Esophagus squamous epithelium (tissue), 5 donors: ENCODE measurements at regions of chr4 and their contacts with region 1.

Region 1: DNA sequence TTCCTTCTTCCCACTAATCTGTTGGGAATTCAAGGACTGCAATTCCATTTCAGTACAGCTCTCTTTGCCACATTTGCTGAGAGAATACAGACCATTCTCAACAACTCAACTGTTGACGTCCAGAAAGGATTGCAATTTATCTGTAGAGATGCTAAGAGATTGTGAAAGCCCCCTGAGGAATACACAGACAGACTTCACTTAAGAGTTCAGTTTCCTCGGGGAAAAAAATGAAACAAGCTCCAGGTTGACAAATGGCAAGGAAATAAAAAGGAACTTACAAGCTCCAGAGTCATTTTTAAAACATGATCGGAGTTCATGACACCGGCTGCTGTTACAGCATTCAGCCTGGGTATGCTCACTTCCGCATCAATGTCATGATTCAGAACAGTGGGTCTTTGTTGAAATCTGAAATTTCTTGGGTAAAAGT is 13.8 kb downstream of the TLR10 start:
- DNase-seq: no peak
- H3K4me3 ChIP-seq: no peak overlapping the region
- H3K27ac ChIP-seq: no peak overlapping the region
- H3K4me1 ChIP-seq: peaks cover 0 to 10% (median 5%) of the 10 kb centered on the region in 3 donors
- H3K27me3 ChIP-seq: no peaks in the 10 kb centered on the region
- CTCF ChIP-seq: no peak
- POLR2A ChIP-seq: no peak

Region 2: DNA sequence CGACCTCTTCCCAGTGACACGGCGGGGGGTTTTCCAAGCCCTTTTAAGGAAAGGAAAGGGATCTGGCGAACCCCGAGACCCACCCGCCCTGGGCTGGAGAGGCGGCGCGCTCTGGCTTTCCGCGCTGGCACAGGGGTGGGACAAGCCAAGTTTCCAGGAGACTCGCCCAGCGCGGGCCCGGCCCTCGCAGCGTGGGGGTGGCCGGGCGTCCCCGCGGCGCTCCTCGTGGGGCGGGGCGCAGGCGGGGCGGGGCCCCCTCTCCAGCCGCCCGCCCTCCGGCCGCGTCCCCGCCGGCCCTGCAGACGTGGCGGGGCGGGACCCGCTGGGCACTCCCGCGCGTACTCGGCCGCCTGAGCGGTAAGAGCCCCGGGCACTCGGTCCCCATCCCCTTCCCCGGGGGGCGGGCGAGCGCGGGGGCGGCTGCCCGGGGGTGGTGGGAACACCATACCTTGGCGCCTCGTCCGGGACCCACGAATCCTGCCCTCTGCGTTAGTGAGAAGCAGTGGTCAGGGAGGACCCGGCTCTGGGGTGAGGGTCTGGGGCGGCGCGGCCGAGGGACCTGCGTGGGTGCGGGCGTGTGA is 98.6 kb after region 1 on chr4 and contains the start of gene FAM114A1:
- intact Hi-C with region 1: loop called (anchors 10 kb)
- DNase-seq: no peak
- H3K4me3 ChIP-seq: peak within 1 kb of the TSS; percentile 58 to 92 (median 83)
- H3K27ac ChIP-seq: peak within 1 kb of the TSS; percentile 87 to 98 (median 97)
- H3K4me1 ChIP-seq: peaks cover 6 to 53% (median 28%) of the 10 kb centered on the region in 3 donors
- H3K27me3 ChIP-seq: no peaks in the 10 kb centered on the region
- CTCF ChIP-seq: no peak
- POLR2A ChIP-seq: peak in 2 of 4 donors; percentile 40 to 48
- total RNA-seq, gene FAM114A1: 36.7 to 80.9 (median 69.2) TPM

Region 3: GRCh38 chr4:39134683-39135319 is 365.8 kb after region 1 on chr4:
- intact Hi-C with region 1: loop called (anchors 10 kb)
- DNase-seq: no peak
- H3K4me3 ChIP-seq: peak overlapping the region in 1 of 4 donors; percentile 15
- H3K27ac ChIP-seq: no peak overlapping the region
- H3K4me1 ChIP-seq: peaks cover 0 to 8% (median 8%) of the 10 kb centered on the region in 3 donors
- H3K27me3 ChIP-seq: no peaks in the 10 kb centered on the region
- CTCF ChIP-seq: no peak
- POLR2A ChIP-seq: no peak